Activated T-helper 2 cell treated with anti-CD3 and anti-CD28 coated beads, Interferon-gamma antibody, Interleukin-2, Interleukin-4, amounts not matched to agents 10 μg/mL and 5 μg/mL and 100 μg/mL, durations not matched to agents 14 hours and 24 hours and 36 hours (primary cell): ENCODE measurements at regions of chr11 and their contacts with region 1.

Region 1: DNA sequence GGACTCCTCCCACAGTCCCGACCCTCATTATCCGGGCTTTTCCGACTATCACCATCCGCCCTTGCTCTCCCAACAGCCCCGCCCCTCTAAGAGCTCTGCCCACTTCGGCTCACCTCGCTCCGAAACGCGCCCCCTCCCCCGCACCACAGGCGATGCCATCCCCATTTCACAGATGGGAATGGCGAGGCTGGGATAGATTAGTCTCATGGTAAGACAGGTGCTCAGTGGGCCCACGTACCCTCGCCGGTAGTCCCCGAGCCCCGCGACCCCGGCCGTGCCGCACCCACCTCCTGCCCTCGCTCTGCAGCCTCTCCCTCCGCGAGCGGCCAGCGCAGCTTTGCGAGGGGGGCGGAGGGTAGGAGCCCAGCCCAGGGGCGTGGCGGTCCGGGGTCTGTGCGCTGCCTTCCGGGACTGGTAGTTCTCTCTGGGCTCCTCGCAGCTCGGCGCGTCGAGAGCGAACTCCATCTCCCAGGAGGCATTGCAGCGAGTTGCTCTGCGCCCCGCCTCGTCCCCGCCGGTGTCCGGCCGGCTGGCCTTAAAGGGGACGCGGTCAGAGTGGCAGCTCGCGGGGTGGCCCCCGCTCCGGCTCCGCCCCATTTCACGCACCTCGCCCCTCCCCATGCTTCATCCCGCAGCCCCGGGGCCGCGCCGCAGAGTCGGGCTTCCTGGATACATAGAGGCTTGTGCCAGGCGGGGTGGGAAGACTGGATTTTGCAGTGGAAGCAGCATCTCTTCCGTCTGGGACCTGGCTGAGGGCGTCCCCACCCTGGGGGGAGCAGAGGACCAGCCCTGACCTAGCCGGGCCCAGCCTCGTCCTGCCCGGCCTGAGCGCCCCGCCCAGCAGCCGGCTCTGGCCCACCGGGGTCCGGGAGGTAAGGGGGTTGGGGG is at the starts of genes KCTD21 and USP35:
- DNase-seq: peak; percentile 93
- H3K4me3 Mint-ChIP-seq: peak within 1 kb of the TSS; percentile 97
- H3K27ac Mint-ChIP-seq: peak within 1 kb of the TSS; percentile 99
- H3K4me1 Mint-ChIP-seq: peaks cover 49% of the 10 kb centered on the region
- H3K27me3 Mint-ChIP-seq: no peaks in the 10 kb centered on the region
- total RNA-seq, gene KCTD21: 10.0 and 10.4 TPM in 2 replicates
- total RNA-seq, gene USP35: 12.9 and 14.6 TPM in 2 replicates

Region 2: DNA sequence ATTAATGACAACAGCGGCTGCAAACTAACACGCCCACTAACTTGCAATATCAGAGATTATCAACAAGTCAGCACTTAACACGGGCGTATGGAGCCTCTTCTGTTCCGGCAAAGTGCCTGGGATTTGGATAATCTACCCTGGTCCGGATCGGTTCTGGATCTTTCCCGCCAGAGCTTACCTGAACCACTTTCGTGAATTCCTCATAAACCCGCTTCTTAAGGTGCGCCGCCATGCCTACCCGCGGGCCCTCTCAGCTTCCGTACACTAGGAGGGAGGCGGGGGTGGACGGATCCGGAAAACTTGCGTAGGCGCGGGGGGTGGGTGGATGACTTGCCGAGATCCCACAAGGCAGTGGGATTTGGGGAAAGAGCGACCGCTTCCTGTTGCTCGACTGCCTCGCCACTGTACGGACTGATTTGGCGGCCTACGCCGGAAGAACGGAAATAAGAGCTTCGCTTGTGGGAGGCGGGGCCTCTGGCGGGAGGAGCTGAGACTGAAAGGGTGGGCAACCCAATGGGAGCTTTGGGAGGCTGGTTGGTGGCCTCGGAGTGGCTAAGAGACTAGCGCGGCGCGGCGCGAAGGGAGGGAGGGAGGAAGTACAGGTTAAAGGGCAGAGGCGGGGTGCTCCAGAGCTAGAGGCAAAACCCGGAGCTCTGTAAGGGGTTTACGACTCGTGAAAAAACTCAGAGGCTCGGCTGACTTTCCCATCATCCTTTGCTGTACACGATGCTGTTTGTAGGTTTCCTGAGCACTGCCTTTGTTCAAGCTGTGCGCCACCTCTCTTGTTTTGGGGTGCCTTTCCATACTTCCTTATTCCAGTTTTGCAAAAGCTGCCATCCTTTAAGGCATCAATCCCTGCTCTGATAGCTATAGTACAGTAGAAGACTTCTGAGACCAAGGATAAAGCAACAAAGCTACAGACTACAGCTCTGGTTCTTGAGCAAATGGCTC is 193.8 kb before region 1 on chr11 and contains the start of gene INTS4:
- intact Hi-C with region 1: loop called (anchors 1 kb)
- DNase-seq: peak; percentile 99
- H3K4me3 Mint-ChIP-seq: peak within 1 kb of the TSS; percentile 91
- H3K27ac Mint-ChIP-seq: peak within 1 kb of the TSS; percentile 76
- H3K4me1 Mint-ChIP-seq: peaks cover 15% of the 10 kb centered on the region
- H3K27me3 Mint-ChIP-seq: no peaks in the 10 kb centered on the region
- total RNA-seq, gene INTS4: 62.7 and 66.8 TPM in 2 replicates

Region 3: DNA sequence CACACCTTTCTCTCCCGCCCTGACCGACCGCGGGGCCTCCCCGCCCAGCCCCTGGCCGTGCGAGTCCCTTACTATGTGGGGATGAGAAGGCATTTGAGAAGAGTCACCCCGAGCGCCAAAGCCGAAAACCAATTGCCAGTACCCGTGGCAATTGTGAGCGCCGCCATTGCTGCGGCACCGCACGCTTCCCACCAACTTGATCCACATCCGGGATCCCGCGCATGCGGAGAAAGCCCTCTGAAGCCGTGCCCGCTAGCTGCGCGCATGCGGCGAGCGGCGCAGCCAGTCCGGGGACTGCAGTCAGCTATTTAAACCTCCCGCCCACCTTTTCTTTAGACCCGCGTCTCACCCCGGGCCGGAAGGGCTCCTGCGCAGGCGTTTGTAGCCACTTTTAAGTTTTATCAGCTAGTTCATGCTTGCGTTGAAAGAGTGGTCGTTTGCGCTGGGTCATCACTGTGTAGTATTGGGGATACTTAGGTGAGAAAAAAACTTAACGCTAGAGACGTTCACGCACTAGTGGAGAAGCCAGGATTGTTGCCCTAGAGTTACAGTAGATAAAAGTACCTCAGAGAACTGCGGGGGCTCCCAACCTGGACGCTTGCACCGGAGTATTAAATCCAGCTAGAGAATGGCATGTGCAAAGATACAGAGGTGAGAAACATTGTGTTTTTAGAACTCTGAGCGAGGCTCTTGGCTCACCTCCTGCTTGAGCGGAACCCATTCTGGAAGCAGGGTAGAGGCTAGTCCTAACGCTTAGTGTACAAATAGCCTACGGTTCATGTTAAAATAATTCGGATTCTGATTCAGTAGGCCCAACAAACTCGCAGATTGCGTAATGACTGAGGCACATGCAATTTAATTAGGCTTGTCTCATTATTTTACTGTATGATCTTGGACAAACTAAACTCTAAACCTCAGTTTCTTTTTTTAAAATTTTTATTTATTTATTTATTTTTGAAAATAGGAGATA is 48.8 kb before region 1 on chr11 and contains the start of gene ALG8:
- intact Hi-C with region 1: loop called (anchors 1 kb)
- DNase-seq: peak; percentile 97
- H3K4me3 Mint-ChIP-seq: peak within 1 kb of the TSS; percentile 89
- H3K27ac Mint-ChIP-seq: peak within 1 kb of the TSS; percentile 83
- H3K4me1 Mint-ChIP-seq: peaks cover 44% of the 10 kb centered on the region
- H3K27me3 Mint-ChIP-seq: no peaks in the 10 kb centered on the region
- total RNA-seq, gene ALG8: 58.6 and 70.1 TPM in 2 replicates

Region 4: GRCh38 chr11:78202733-78203167 is 14.2 kb after region 1 on chr11:
- intact Hi-C with region 1: loop called (anchors 1 kb)
- DNase-seq: peak; percentile 51
- H3K4me3 Mint-ChIP-seq: peak overlapping the region; percentile 73
- H3K27ac Mint-ChIP-seq: peak overlapping the region; percentile 91
- H3K4me1 Mint-ChIP-seq: peaks cover 30% of the 10 kb centered on the region
- H3K27me3 Mint-ChIP-seq: no peaks in the 10 kb centered on the region

Region 5: GRCh38 chr11:78564490-78565467 is 376.2 kb after region 1 on chr11:
- intact Hi-C with region 1: loop called (anchors 2 kb)
- DNase-seq: peak; percentile 26
- H3K4me3 Mint-ChIP-seq: no peak overlapping the region
- H3K27ac Mint-ChIP-seq: peak overlapping the region; percentile 76
- H3K4me1 Mint-ChIP-seq: peaks cover 53% of the 10 kb centered on the region
- H3K27me3 Mint-ChIP-seq: no peaks in the 10 kb centered on the region